Tibial artery (tissue), 4 donors: ENCODE measurements at regions of chr2 and their contacts with region 1.

Region 1: DNA sequence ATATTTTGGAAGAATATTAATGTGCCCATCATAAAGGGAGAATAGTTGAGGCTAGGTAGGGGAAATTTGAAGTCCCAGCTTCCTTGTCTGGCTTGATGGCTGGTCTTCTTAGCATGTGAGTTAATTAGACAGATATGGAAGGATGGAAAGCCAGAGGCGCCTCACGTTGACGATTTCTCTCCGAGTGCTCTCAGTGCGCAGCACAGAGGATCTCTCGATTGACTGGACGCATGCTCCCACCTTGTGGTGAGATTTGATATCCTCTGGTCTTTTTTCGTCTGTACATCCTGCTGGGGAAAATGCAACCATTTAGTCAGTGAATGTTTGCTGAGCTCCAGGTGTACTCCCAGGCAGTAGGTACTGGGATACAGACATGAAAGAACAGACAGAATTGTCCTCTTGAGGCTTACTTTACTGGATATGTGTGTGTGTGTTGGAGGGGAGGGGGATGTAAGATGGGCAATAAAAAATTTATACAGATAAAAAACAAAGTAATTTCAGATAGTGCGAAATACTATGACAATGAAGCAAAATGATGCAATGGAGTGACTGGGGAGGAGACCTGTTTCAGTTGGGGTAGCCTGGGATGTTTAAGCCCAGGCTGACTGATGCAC is 66.9 kb upstream of the ZNG1B start:
- DNase-seq: peak; percentile 58 to 74
- H3K4me3 ChIP-seq: no peak overlapping the region
- H3K27ac ChIP-seq: no peak overlapping the region
- H3K4me1 ChIP-seq: peaks cover 0 to 4% (median 1%) of the 10 kb centered on the region in 4 donors
- H3K27me3 ChIP-seq: peaks cover 0 to 11% of the 10 kb centered on the region in 2 donors
- CTCF ChIP-seq: peak; percentile 67 to 86

Region 2: GRCh38 chr2:113203901-113204519 is 166.6 kb before region 1 on chr2:
- intact Hi-C with region 1: loop called (anchors 5 kb)
- DNase-seq: peak; percentile 51 to 80
- H3K4me3 ChIP-seq: no peak overlapping the region
- H3K27ac ChIP-seq: no peak overlapping the region
- H3K4me1 ChIP-seq: peaks cover 0 to 5% (median 2%) of the 10 kb centered on the region in 4 donors
- H3K27me3 ChIP-seq: no peaks in the 10 kb centered on the region
- CTCF ChIP-seq: peak; percentile 65 to 75

Region 3: GRCh38 chr2:113248997-113249770 is 121.4 kb before region 1 on chr2:
- intact Hi-C with region 1: loop called (anchors 2 kb)
- DNase-seq: peak; percentile 83 to 87
- H3K4me3 ChIP-seq: no peak overlapping the region
- H3K27ac ChIP-seq: no peak overlapping the region
- H3K4me1 ChIP-seq: no peaks in the 10 kb centered on the region
- H3K27me3 ChIP-seq: peaks cover 0 to 2% of the 10 kb centered on the region in 2 donors
- CTCF ChIP-seq: peak; percentile 87 to 90

Region 4: GRCh38 chr2:113768770-113769169 is 398.2 kb after region 1 on chr2:
- intact Hi-C with region 1: no loop called
- DNase-seq: no peak
- H3K4me3 ChIP-seq: no peak overlapping the region
- H3K27ac ChIP-seq: no peak overlapping the region
- H3K4me1 ChIP-seq: no peaks in the 10 kb centered on the region
- H3K27me3 ChIP-seq: no peaks in the 10 kb centered on the region
- CTCF ChIP-seq: no peak